ENCODE measurements at regions of chr6 and their contacts with region 1.

Region 1: DNA sequence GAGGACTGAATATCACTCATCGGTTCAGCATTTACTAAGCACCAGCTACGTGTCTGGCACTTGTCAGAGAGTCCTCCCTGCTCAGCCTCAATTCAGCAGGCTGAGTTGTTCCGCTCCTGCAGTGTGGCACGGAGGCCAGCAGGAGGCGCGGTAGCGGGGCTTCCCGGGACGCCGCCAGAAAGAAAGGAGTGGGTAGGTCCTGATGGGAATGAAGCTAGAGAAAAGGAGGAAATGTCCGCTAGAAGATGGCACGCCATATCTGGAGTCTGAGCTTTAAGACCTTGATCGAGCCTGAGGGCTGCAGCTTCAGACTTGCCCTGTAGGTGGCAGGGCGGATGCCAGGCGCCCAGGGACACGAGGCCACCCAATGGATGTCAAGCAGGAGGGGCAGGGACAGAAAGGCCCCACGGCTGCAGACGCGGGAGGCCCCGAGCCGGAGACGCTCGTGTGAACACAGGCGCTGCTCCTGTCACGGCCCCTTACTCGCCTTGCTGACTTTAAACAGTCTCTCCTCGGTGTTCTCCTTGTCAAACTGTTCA is 18.7 kb downstream of the SERPINB6 start:
- DNase-seq: peak; percentile 86
- ATAC-seq: peak; percentile 68

Region 2: GRCh38 chr6:2841264-2842138 is 111.1 kb before region 1 on chr6 and contains the start of gene SERPINB1:
- intact Hi-C with region 1: no loop called
- DNase-seq: peak; percentile 95
- ATAC-seq: peak; percentile 92
- total RNA-seq, gene SERPINB1: 25.4 TPM

Region 3: DNA sequence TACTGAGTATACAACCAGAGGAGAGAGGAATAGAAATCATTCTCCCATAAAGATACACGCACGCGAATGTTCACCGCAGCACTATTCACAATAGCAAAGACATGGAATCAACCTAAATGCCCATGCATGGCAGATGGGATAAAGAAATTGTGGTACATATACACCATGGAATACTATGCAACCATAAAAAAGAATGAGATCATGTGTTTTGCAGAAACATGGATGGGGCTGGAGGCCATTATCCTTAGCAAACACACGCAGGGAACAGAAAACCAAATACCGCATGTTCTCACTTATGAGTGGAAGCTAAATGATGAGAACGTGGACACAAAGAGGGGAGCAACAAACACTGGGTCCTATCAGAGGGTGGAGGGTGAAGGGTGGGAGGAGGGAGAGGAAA is 15.3 kb after region 1 on chr6:
- intact Hi-C with region 1: loop called (anchors 1 kb)
- DNase-seq: no peak
- ATAC-seq: no peak

Region 4: DNA sequence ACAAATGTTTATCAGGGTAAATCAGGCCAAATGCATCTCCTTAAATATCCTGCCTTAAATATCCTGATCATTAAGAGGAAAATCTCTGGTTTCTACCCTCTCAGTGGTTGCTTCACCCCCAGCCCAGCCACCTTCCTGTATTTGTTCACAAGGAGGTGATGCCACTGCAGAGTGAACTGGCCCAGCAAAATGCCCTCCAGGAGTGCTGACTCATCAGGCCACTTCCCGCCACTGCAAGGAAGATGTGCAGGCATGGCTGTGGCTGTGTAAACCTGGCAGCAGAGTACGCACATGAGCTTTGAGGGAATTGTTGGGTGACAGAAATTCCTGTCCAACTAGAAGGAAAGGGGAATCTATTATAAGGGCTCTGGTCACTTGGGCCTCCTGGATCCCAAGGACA is 60.9 kb after region 1 on chr6:
- intact Hi-C with region 1: no loop called
- DNase-seq: no peak
- ATAC-seq: peak; percentile 38

Measured in left ventricle myocardium superior (tissue), 1 donor.